ENCODE measurements at regions of chr4 and their contacts with region 1.

Region 1: DNA sequence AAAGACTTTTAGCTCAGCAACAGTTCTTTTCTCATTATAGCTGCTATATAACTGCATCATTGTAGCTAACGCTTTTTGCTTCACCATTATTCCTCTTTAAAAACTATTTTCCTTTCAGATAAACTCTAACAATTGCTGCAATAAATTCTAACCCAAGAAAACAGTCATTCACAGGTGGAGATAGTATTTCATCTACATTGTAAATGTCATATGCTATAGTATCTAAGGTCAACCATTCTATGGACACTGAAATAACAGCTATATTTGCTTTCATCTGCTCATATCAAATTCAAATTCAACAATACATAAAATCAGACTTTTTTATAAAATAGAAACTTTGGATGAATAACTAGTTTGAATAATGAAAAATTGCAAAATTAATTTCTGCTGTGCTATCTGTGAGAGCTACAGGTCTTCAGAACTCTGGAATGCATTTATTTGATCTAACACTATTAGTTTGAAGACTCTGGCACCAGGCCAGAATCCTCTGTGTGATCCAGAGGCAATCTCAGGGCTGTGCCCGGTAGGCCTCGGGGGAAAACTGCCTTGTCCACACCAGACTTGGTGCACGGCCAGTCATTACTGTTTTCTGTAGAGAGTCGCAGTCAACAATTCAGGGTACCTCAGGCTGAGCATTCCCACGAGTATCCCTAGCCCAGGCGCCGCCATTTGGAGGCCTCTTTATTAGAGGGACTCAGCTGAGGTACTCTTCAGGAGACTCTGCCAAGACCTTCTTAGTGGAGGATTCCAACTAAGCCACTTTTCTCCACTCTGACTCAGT is 332.4 kb downstream of the SLC7A11 start:
- DNase-seq: no peak
- H3K4me3 ChIP-seq: no peak overlapping the region
- H3K27ac ChIP-seq: no peak overlapping the region
- H3K4me1 ChIP-seq: no peaks in the 10 kb centered on the region
- H3K27me3 ChIP-seq: no peaks in the 10 kb centered on the region
- CTCF ChIP-seq: no peak
- EP300 ChIP-seq: no peak
- POLR2A ChIP-seq: no peak

Region 2: GRCh38 chr4:137923494-137923893 is 13.8 kb after region 1 on chr4:
- intact Hi-C with region 1: loop called (anchors 1 kb)
- DNase-seq: no peak
- H3K4me3 ChIP-seq: no peak overlapping the region
- H3K27ac ChIP-seq: no peak overlapping the region
- H3K4me1 ChIP-seq: no peaks in the 10 kb centered on the region
- H3K27me3 ChIP-seq: no peaks in the 10 kb centered on the region
- CTCF ChIP-seq: no peak
- EP300 ChIP-seq: no peak
- POLR2A ChIP-seq: no peak